ENCODE measurements at regions of chrX and their contacts with region 1.

Region 1: GRCh38 chrX:145751943-145752342 is 65.7 kb upstream of the SLITRK2 start:
- DNase-seq: no peak
- H3K4me3 ChIP-seq: no peak overlapping the region
- H3K27ac ChIP-seq: no peak overlapping the region
- H3K27me3 ChIP-seq: peaks cover 0 to 32% (median 0%) of the 10 kb centered on the region in 45 donors
- CTCF ChIP-seq: no peak

Region 2: DNA sequence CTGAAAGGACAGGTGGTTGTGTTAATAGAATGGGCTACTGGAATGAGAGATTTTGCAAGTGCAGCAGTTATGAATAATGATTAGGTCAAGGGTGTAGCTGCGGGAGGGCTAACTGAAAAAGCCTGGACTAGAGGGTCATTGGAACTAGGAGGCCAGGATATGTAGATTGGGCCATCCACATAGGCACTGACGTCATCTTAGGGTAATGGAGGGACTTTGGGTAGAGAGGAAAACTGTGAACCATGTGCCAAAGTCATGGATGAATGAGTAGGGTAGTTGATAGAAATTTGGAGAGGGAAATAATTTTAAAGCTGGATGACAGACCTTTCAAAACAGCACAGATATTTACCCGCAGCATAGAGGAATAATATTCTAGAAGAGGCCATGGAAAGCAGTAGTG is 57.9 kb before region 1 on chrX:
- intact Hi-C with region 1: loop called in 1 of 2 experiments (anchors 10 kb)
- DNase-seq: no peak
- H3K4me3 ChIP-seq: no peak overlapping the region
- H3K27ac ChIP-seq: no peak overlapping the region
- H3K27me3 ChIP-seq: peaks cover 0 to 45% (median 14%) of the 10 kb centered on the region in 45 donors
- CTCF ChIP-seq: no peak

Measured in dorsolateral prefrontal cortex (tissue), 120 donors.